Heart right ventricle (tissue), 16 donors: ENCODE measurements at regions of chr11 and their contacts with region 1.

Region 1: DNA sequence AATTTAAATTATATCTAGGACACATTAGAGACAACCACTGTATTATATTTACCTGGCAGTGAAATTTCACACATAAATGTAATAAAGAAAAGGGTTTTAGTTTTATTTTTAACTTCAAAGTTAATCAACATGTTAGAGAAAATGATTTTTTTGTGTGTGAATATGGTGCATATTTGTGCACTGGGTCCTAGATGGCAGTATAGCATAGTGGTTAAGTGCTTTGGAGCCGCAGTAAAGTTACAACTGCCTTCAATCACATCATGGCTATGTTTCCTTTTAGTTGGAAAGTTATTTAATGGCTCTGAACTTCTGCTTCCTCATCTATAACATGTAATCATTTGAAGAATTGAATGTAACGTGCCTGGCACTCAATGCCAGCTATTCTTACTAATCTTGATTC is 108.9 kb upstream of the DDI1 start:
- DNase-seq: no peak
- ATAC-seq: no peak
- H3K4me3 ChIP-seq: no peak overlapping the region
- H3K27ac ChIP-seq: no peak overlapping the region
- H3K4me1 ChIP-seq: peaks cover 0 to 13% (median 6%) of the 10 kb centered on the region in 9 donors
- H3K27me3 ChIP-seq: no peaks in the 10 kb centered on the region
- CTCF ChIP-seq: peak in 6 of 9 donors; percentile 32 to 54 (median 48)

Region 2: GRCh38 chr11:103737747-103738146 is 189.8 kb before region 1 on chr11:
- intact Hi-C with region 1: loop called in 1 of 10 experiments (anchors 1 kb)
- DNase-seq: peak; percentile 18 to 30
- ATAC-seq: peak in 5 of 8 donors; percentile 37 to 66 (median 40)
- H3K4me3 ChIP-seq: no peak overlapping the region
- H3K27ac ChIP-seq: peak overlapping the region in 9 of 10 donors; percentile 65 to 86 (median 72)
- H3K4me1 ChIP-seq: peaks cover 0 to 52% (median 33%) of the 10 kb centered on the region in 9 donors
- H3K27me3 ChIP-seq: no peaks in the 10 kb centered on the region
- CTCF ChIP-seq: no peak

Region 3: DNA sequence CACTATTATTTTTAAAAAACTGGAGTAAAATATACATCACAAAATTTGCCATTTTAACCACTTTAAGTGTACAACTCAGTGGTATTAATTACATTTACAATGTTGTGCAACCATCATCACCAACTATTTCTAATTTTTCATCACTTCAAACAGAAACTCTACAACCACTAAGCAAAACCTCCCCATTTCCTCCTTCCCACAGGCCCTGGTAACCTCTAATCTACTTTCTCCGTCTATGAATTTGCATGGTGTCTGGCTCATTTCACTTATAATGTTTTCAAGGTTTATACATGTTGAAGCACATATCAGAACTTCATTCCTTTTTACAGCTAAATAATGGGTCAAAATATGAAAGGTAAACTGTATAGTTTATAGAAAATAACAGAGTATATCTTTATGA is 133.3 kb after region 1 on chr11:
- intact Hi-C with region 1: no loop called
- DNase-seq: no peak
- ATAC-seq: no peak
- H3K4me3 ChIP-seq: no peak overlapping the region
- H3K27ac ChIP-seq: no peak overlapping the region
- H3K4me1 ChIP-seq: peaks cover 0 to 24% (median 0%) of the 10 kb centered on the region in 9 donors
- H3K27me3 ChIP-seq: no peaks in the 10 kb centered on the region
- CTCF ChIP-seq: no peak

Region 4: GRCh38 chr11:104151404-104152204 is 224.1 kb after region 1 on chr11:
- intact Hi-C with region 1: loop called in 3 of 10 experiments (anchors 5 to 10 kb)
- DNase-seq: no peak
- ATAC-seq: no peak
- H3K4me3 ChIP-seq: no peak overlapping the region
- H3K27ac ChIP-seq: no peak overlapping the region
- H3K4me1 ChIP-seq: peaks cover 0 to 13% (median 5%) of the 10 kb centered on the region in 9 donors
- H3K27me3 ChIP-seq: no peaks in the 10 kb centered on the region
- CTCF ChIP-seq: peak in 8 of 9 donors; percentile 11 to 58 (median 42)